ENCODE measurements at regions of chr2 and their contacts with region 1.

Region 1: DNA sequence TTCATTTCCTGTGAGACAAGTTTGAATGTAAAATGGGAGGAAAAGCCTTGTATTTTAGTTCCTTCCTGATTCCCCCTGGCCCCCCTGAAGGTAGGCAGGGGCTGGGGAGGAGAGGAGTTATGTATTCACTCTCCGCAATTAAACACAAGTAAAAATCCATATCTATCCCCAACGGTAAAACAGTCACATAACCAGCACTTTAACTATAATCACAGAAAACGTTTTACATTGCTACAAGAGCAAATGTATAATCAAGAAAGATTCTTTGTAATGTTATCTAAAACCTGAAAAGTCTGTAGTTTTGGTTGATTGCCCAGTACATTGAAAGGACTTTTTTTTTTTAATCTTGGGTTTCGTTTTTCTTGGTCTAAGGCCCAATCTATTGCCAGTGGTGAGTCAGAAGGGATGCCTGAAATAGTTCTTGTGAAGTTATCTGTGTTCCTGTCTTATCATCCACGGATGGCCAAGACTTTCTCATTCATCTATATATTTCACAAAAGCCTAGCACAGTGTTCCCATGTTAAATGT is 34.5 kb upstream of the CCNYL1 start:
- DNase-seq: peak; percentile 89
- H3K4me3 ChIP-seq: peak overlapping the region; percentile 16 to 70 (median 29)
- H3K27ac ChIP-seq: peak overlapping the region; percentile 94
- H3K4me1 ChIP-seq: peaks cover 17% of the 10 kb centered on the region
- H3K27me3 ChIP-seq: no peaks in the 10 kb centered on the region
- CTCF ChIP-seq: no peak
- POLR2A ChIP-seq: peak; percentile 24

Region 2: DNA sequence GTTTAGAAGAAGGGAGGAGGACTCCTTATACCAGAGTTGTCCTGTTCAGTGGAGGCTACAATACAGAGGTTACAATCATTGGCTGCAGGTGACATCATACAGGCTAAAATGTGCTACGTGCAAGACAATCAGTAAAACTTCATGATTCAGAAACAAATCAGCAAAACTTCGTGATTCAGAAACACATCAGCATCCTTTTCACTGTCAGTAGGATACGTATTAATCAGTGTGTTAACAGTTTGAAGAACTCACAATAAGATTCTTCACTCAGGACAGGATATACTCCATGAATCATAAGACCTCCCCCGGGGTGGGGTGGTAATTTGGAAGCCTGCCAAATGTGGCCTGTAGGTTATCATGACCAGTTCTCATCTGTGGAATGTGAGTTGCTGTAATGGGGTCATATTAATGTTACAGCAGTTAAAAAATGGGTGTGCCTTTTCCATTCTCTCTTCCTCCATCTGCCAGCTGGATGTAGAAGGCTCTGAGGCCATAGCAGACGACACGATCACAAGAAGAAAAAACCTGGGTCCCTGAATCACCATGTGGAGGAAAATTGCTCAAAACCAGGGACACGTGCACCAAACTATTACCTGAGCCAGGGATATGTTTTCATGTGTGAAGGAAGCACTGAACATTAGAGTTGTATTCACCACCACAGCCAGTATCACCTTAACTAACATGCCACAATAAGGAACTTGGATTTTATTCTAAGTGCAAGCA is 281.9 kb before region 1 on chr2:
- CTCF ChIA-PET with region 1: no interaction called
- POLR2A ChIA-PET with region 1: no interaction called
- dilution Hi-C with region 1: no loop called
- intact Hi-C with region 1: loop called (anchors 5 kb)
- DNase-seq: peak; percentile 98
- H3K4me3 ChIP-seq: no peak overlapping the region
- H3K27ac ChIP-seq: peak overlapping the region; percentile 99
- H3K4me1 ChIP-seq: peaks cover 21% of the 10 kb centered on the region
- H3K27me3 ChIP-seq: no peaks in the 10 kb centered on the region
- CTCF ChIP-seq: no peak
- POLR2A ChIP-seq: peak; percentile 44

Region 3: DNA sequence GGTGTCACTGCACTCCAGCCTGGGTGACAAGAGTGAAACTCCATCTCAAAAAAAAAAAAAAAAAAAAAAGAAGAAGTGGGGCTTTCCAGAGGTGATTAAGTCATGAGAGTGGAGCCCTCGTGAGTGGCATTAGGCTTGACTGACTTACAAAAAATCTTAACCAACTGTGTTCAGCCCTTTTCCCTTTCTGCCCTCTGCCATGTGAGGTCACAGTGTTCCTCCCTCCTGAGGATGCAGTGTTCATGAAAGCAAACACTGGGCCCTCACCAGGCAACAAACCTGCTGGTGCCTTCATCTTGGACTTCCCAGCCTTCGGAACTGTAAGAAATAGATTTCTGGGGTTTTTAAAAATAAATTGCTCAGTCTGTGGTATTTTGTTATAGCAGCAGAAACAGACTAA is 14.7 kb before region 1 on chr2:
- CTCF ChIA-PET with region 1: no interaction called
- POLR2A ChIA-PET with region 1: no interaction called
- dilution Hi-C with region 1: no loop called
- intact Hi-C with region 1: no loop called
- DNase-seq: no peak
- H3K4me3 ChIP-seq: no peak overlapping the region
- H3K27ac ChIP-seq: no peak overlapping the region
- H3K4me1 ChIP-seq: no peaks in the 10 kb centered on the region
- H3K27me3 ChIP-seq: no peaks in the 10 kb centered on the region
- CTCF ChIP-seq: no peak
- POLR2A ChIP-seq: no peak

Region 4: GRCh38 chr2:207710814-207711740 is 34.2 kb after region 1 on chr2 and contains the start of gene CCNYL1:
- CTCF ChIA-PET with region 1: interaction called, 5 read pairs
- POLR2A ChIA-PET with region 1: no interaction called
- dilution Hi-C with region 1: no loop called
- intact Hi-C with region 1: loop called (anchors 1 kb)
- DNase-seq: peak; percentile 100
- H3K4me3 ChIP-seq: peak within 1 kb of the TSS; percentile 78 to 88 (median 78)
- H3K27ac ChIP-seq: peak within 1 kb of the TSS; percentile 86
- H3K4me1 ChIP-seq: peaks cover 21% of the 10 kb centered on the region
- H3K27me3 ChIP-seq: no peaks in the 10 kb centered on the region
- CTCF ChIP-seq: peak in 1 of 2 donors; percentile 3
- POLR2A ChIP-seq: peak; percentile 69
- total RNA-seq, gene CCNYL1: 47.3 and 49.3 TPM in 2 replicates

Region 5: DNA sequence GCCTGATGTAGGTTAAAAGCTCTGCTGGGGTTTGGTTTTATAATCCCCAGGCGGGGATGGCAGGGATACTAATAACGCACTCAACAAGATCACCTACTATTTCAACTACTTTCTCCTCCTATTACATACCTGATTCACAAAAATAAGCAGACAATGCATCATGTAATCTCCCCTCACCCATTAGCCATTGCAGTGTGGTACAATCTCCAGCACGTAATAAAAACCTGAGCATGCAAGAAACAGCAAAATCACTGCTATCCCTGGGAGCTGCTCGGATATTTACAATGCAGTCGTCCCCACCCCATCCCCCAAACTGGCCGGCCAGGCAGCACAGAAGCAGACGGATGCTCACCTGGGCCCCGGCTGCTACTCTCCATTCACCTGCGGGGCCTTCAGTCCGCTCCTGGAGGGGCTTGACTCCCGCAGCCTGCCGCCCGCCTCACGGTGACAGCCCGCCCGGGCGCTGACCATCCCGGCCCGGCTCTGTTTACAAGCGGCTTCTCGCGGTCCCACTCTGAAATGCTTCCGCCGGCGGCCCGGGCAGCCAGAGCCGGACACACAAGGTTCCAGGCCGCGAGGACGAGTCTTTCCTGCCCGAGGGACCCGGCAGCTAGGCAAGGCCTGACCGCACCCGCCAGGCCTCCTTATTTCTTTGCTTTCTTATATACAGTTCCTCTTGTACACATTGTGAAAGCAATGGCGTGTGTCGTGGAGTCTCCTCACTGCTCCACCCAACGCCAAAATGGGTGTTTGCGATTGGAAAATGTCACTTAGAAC is 348.3 kb after region 1 on chr2 and contains the start of gene PLEKHM3:
- CTCF ChIA-PET with region 1: no interaction called
- POLR2A ChIA-PET with region 1: no interaction called
- dilution Hi-C with region 1: no loop called
- intact Hi-C with region 1: loop called (anchors 5 kb)
- DNase-seq: peak; percentile 87
- H3K4me3 ChIP-seq: peak within 1 kb of the TSS; percentile 74 to 96 (median 94)
- H3K27ac ChIP-seq: peak within 1 kb of the TSS; percentile 45
- H3K4me1 ChIP-seq: peaks cover 12% of the 10 kb centered on the region
- H3K27me3 ChIP-seq: peaks cover 0 to 1% of the 10 kb centered on the region in 2 experiments
- CTCF ChIP-seq: no peak
- POLR2A ChIP-seq: peak; percentile 82
- total RNA-seq, gene PLEKHM3: 8.5 and 9.1 TPM in 2 replicates

Measured in endothelial cell of umbilical vein (primary cell).